ENCODE measurements at regions of chr10 and their contacts with region 1.

Region 1: DNA sequence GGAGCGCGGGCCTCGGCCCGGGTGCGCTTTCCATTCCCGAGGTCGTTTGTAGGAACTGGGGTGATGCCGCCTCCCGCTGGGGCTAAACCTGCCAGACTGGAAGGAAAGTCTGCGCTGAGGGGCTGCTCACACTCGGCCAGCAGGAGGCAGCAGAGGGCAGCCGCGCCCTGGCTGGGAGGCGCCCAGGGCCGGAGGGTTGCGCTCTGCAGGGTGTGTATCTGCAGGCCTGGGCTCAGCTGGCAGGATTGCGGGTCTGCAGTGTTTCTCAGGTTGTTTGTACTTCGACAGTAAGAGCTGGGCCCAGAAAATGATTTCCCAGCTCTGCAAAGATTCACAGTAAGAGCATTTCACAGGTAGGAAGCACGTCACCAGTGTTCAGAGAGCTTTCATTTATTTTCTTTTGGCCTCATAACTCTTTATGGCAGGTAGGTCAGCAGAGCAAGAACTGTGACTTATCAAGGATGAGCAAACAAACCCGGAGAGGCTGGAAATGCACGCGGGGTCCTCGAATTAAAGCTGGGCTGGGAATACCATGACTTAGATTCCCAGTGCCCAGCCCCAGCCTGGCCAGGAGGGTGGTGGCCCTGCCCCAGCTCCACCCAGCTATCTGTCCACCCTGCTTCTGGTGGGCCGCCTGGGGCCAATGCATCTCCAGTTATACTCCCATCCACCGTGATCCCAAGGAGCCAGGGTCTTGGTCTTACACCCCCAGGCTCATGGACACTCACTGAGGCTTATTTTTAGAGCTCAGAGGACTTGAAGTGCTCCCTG is 15.2 kb upstream of the PPP2R2D start:
- DNase-seq: no peak
- H3K4me3 ChIP-seq: no peak overlapping the region
- CTCF ChIP-seq: peak; percentile 91

Region 2: DNA sequence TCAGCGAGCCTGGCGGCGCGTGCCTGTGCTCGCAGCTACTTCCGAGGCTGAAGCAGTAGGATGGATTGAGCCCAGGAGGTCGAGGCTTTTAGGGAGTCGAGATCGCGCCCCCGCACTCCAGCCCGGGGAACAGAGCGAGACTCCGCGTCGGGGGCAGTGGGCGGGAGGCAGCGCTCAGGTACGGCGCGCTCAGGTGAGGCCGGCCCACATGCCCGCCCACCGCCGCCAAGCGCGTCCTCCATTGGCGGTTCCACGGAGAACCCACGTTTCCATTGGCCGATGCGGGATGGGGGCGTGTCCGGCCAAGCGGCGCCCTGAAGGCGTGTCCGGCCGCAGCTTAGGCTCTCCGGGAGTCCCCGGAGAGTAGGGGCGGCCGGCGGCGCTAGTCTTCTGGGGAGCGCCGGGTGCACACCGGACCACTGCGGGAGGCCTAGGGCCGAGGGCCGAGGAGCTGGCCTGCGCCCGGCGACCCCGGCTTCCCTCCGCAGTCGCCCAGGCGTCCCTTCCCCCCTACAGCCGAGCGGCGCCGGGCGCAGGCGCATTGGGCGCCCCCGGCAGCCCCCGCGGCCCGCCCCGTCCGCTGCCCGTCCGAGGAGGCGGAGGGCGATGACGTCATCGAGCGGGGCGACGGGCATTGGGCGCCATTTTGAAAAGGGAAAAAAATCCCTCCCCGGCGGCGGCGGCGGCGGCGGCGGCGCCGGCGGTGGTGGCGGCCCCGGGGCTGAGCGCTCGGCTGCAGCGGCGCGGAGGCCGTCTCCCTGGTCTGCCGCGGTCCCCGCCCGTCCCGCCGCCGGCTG is 15.0 kb after region 1 on chr10 and contains the start of gene PPP2R2D:
- CTCF ChIA-PET with region 1: interaction called, 14 read pairs
- POLR2A ChIA-PET with region 1: no interaction called
- DNase-seq: peak; percentile 23
- H3K4me3 ChIP-seq: peak within 1 kb of the TSS; percentile 82
- CTCF ChIP-seq: no peak

Region 3: GRCh38 chr10:132142411-132143161 is 257.0 kb after region 1 on chr10:
- CTCF ChIA-PET with region 1: interaction called, 13 read pairs
- POLR2A ChIA-PET with region 1: no interaction called
- DNase-seq: no peak
- H3K4me3 ChIP-seq: no peak overlapping the region
- CTCF ChIP-seq: peak; percentile 85

Measured in AG04449 (cell line).